Activated naive CD4-positive, alpha-beta T cell treated with anti-CD3 and anti-CD28 coated beads for 36 hours (primary cell): ENCODE measurements at regions of chr4 and their contacts with region 1.

Region 1: DNA sequence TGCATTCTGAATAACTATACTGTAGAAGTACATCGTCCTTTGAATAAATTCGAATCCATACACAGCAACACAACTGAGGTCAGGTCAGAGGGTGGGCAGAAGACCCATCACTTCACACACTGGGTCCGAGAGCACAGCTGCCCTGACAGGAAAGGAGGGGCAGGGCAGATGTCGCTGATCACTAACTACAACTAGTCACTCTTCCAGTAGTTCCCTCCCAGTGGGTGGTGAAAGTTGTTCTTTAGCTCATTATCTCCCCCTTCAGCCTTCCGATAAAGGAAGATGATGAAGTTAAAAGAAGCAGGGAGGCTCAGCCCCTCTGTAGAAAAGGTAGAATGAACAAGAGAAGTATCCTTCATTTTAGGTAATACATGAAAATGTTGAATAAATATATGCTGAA is 278.9 kb downstream of the INPP4B start:
- DNase-seq: peak; percentile 77
- H3K4me3 Mint-ChIP-seq: peak overlapping the region; percentile 77
- H3K27ac Mint-ChIP-seq: peak overlapping the region; percentile 94
- H3K4me1 Mint-ChIP-seq: peaks cover 48% of the 10 kb centered on the region
- H3K27me3 Mint-ChIP-seq: no peaks in the 10 kb centered on the region

Region 2: GRCh38 chr4:141220655-141221605 is 1346.3 kb before region 1 on chr4 and contains the start of gene ZNF330:
- CTCF ChIA-PET with region 1: no interaction called
- intact Hi-C with region 1: loop called (anchors 2 kb)
- DNase-seq: peak; percentile 89
- H3K4me3 Mint-ChIP-seq: peak within 1 kb of the TSS; percentile 94
- H3K27ac Mint-ChIP-seq: peak within 1 kb of the TSS; percentile 94
- H3K4me1 Mint-ChIP-seq: peaks cover 43% of the 10 kb centered on the region
- H3K27me3 Mint-ChIP-seq: no peaks in the 10 kb centered on the region
- total RNA-seq, gene ZNF330: 67.2 to 75.5 TPM

Region 3: GRCh38 chr4:142282870-142283431 is 284.2 kb before region 1 on chr4:
- CTCF ChIA-PET with region 1: interaction called, 3 read pairs
- intact Hi-C with region 1: loop called (anchors 1 kb)
- DNase-seq: peak; percentile 60
- H3K4me3 Mint-ChIP-seq: no peak overlapping the region
- H3K27ac Mint-ChIP-seq: no peak overlapping the region
- H3K4me1 Mint-ChIP-seq: peaks cover 29% of the 10 kb centered on the region
- H3K27me3 Mint-ChIP-seq: no peaks in the 10 kb centered on the region

Region 4: GRCh38 chr4:142416711-142417275 is 150.4 kb before region 1 on chr4:
- CTCF ChIA-PET with region 1: interaction called, 10 read pairs
- intact Hi-C with region 1: loop called (anchors 1 kb)
- DNase-seq: peak; percentile 36
- H3K4me3 Mint-ChIP-seq: peak overlapping the region; percentile 62
- H3K27ac Mint-ChIP-seq: peak overlapping the region; percentile 95
- H3K4me1 Mint-ChIP-seq: peaks cover 66% of the 10 kb centered on the region
- H3K27me3 Mint-ChIP-seq: no peaks in the 10 kb centered on the region

Region 5: GRCh38 chr4:142696334-142697122 is 129.3 kb after region 1 on chr4:
- CTCF ChIA-PET with region 1: interaction called, 4 read pairs
- intact Hi-C with region 1: loop called (anchors 5 kb)
- DNase-seq: peak; percentile 37
- H3K4me3 Mint-ChIP-seq: peak overlapping the region; percentile 55
- H3K27ac Mint-ChIP-seq: peak overlapping the region; percentile 93
- H3K4me1 Mint-ChIP-seq: peaks cover 62% of the 10 kb centered on the region
- H3K27me3 Mint-ChIP-seq: no peaks in the 10 kb centered on the region

Region 6: GRCh38 chr4:142817442-142817841 is 250.2 kb after region 1 on chr4:
- CTCF ChIA-PET with region 1: no interaction called
- intact Hi-C with region 1: loop called (anchors 2 kb)
- DNase-seq: peak; percentile 80
- H3K4me3 Mint-ChIP-seq: peak overlapping the region; percentile 27
- H3K27ac Mint-ChIP-seq: peak overlapping the region; percentile 30
- H3K4me1 Mint-ChIP-seq: peaks cover 23% of the 10 kb centered on the region
- H3K27me3 Mint-ChIP-seq: no peaks in the 10 kb centered on the region

Region 7: DNA sequence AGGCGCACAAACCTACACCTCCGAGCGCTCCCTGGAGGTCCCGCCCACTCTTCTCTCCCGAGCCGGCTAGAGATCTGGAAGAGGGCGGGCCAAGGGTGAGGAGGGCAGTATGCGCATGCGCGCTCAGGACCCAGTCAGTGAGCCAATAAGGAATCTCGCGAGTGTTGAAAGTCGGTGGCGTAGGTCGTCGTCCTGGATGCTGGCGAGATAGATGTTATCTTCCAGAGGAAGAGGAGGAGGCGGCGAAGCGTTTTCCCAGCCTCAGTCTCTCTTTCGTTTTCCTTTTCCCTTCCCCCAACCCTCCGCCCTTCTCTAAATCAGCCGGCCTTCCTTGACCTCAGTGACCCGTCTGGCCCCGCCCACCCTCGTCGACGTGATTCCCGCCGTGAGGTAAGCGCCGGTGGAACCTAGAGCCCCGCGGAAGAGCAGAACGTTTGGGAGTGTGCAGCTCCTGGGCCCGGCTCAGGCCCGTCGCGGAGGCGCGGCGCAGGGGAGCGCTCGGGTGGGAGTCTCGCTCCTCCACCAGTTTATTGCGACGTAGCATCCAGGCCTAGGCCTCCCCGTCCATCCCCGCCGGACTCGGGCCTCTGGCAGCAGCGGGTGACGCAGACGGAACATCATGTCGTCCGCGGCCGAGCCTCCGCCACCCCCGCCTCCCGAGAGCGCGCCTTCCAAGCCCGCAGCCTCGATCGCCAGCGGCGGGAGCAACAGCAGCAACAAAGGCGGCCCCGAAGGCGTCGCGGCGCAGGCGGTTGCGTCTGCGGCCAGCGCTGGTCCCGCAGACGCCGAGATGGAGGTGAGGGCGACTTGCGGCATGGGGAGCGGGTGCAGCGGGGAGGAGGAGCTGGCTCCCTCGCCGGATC is 946.3 kb after region 1 on chr4 and contains the start of gene SMARCA5:
- CTCF ChIA-PET with region 1: no interaction called
- intact Hi-C with region 1: loop called (anchors 5 kb)
- DNase-seq: peak; percentile 96
- H3K4me3 Mint-ChIP-seq: peak within 1 kb of the TSS; percentile 96
- H3K27ac Mint-ChIP-seq: peak within 1 kb of the TSS; percentile 97
- H3K4me1 Mint-ChIP-seq: peaks cover 30% of the 10 kb centered on the region
- H3K27me3 Mint-ChIP-seq: no peaks in the 10 kb centered on the region
- total RNA-seq, gene SMARCA5: 62.4 to 63.5 TPM